PC-3 (cell line): ENCODE measurements at regions of chr4 and their contacts with region 1.

Region 1: DNA sequence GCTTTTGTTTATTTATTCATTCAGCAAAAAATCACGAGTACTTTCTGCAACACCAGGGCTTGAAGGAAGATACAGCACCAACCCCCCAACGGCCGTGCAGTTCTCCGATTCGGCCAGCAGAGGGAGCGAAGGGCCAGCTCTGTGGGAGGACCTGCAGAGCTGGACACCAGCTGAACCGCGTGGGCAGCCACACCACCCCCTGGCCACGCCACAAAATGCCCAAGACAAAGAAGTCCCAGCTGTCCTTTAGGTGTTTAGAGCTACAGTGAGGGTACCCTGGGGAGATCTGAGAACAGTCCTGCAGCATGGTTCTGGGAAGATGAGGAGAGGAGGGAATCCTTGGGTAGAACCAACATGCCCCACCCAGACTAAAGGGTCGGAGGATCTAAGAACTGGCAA is 83.1 kb downstream of the RELL1 start:
- DNase-seq: peak; percentile 72
- ATAC-seq: peak; percentile 87
- H3K4me3 ChIP-seq: no peak overlapping the region
- H3K27ac ChIP-seq: no peak overlapping the region
- H3K4me1 ChIP-seq: peaks cover 16% of the 10 kb centered on the region
- H3K27me3 ChIP-seq: no peaks in the 10 kb centered on the region
- CTCF ChIP-seq: peak; percentile 89

Region 2: GRCh38 chr4:37793562-37793961 is 190.5 kb after region 1 on chr4:
- CTCF ChIA-PET with region 1: no interaction called
- POLR2A ChIA-PET with region 1: no interaction called
- intact Hi-C with region 1: loop called (anchors 2 kb)
- DNase-seq: peak; percentile 37
- ATAC-seq: no peak; the same call in 1 of the 2 replicates
- H3K4me3 ChIP-seq: no peak overlapping the region
- H3K27ac ChIP-seq: no peak overlapping the region
- H3K4me1 ChIP-seq: no peaks in the 10 kb centered on the region
- H3K27me3 ChIP-seq: no peaks in the 10 kb centered on the region
- CTCF ChIP-seq: peak; percentile 53